ENCODE measurements at regions of chr2 and their contacts with region 1.

Region 1: DNA sequence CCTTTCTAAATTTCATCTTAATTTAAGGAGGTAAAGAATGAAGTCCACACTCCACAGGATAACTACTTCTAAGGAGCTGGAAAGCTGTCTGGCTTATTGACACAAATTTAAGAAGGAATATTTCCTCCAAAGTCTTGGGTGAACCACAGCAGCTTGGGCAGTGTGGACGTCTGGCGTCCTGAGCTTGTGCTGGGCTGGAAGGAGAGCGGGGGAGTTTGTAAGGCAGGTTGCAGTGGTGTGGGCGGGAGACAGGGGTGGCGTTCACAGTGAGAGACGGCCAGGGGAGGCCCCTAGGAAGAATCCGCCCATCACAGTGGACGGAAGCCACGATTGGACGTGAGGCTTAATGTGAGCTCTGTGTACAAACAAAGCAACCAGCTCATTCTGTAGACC is 25.7 kb downstream of the ADI1 start:
- DNase-seq: no peak
- H3K4me3 ChIP-seq: peak overlapping the region; percentile 21 to 55
- H3K27ac ChIP-seq: peak overlapping the region; percentile 90 to 93
- H3K4me1 ChIP-seq: peaks cover 6 to 16% of the 10 kb centered on the region in 2 donors
- H3K27me3 ChIP-seq: no peaks in the 10 kb centered on the region
- CTCF ChIP-seq: no peak

Region 2: GRCh38 chr2:3450375-3451010 is 43.1 kb before region 1 on chr2:
- intact Hi-C with region 1: no loop called
- DNase-seq: no peak
- H3K4me3 ChIP-seq: no peak overlapping the region
- H3K27ac ChIP-seq: no peak overlapping the region
- H3K4me1 ChIP-seq: no peaks in the 10 kb centered on the region
- H3K27me3 ChIP-seq: no peaks in the 10 kb centered on the region
- CTCF ChIP-seq: no peak

Region 3: DNA sequence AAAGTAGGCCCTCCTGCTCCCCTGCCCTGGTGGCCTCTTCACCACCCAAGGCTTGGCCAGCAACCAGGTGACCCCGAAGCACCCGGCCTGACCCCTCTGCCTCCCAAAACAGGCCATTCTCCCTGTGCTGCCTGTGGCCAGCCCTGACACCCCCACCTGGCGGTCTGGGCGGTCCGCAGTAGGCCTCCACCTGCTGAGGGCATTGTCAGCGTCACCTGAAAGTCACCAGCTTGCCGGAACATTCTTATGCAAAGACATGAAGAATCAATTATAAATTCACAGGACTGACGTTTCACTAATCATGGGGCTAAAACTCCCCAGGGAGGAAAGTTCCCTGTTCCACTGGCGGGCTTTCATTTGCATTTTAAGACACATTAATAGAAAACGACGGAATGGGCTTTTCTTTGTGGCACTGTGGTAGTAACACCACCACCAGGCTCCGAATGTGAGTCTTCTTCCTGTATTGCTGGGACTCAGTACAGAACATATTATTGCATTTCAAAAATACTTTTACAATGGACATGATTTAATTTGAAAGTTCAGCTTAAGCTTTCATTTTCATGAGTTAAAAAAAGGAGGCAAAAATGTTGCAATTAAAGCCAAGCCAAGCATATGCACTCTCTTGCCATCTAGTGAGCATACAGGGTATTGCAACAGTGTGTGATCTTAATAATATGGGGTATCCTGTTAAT is 31.7 kb before region 1 on chr2:
- intact Hi-C with region 1: loop called (anchors 2 kb)
- DNase-seq: peak in 1 of 2 donors; percentile 63
- H3K4me3 ChIP-seq: peak overlapping the region in 1 of 2 donors; percentile 32
- H3K27ac ChIP-seq: peak overlapping the region; percentile 78 to 90
- H3K4me1 ChIP-seq: peaks cover 6 to 7% of the 10 kb centered on the region in 2 donors
- H3K27me3 ChIP-seq: no peaks in the 10 kb centered on the region
- CTCF ChIP-seq: peak; percentile 54 to 97 (median 81)

Region 4: GRCh38 chr2:3470166-3470651 is 23.4 kb before region 1 on chr2:
- intact Hi-C with region 1: loop called (anchors 1 kb)
- DNase-seq: peak; percentile 60 to 93
- H3K4me3 ChIP-seq: peak overlapping the region in 1 of 2 donors; percentile 25
- H3K27ac ChIP-seq: peak overlapping the region; percentile 90 to 91
- H3K4me1 ChIP-seq: peaks cover 2 to 28% of the 10 kb centered on the region in 2 donors
- H3K27me3 ChIP-seq: no peaks in the 10 kb centered on the region
- CTCF ChIP-seq: no peak

Region 5: GRCh38 chr2:3518496-3519254 is 25.1 kb after region 1 on chr2:
- intact Hi-C with region 1: loop called (anchors 1 kb)
- DNase-seq: peak; percentile 91 to 98
- H3K4me3 ChIP-seq: peak overlapping the region; percentile 84 to 93
- H3K27ac ChIP-seq: peak overlapping the region; percentile 97 to 100
- H3K4me1 ChIP-seq: peaks cover 4 to 18% of the 10 kb centered on the region in 2 donors
- H3K27me3 ChIP-seq: no peaks in the 10 kb centered on the region
- CTCF ChIP-seq: no peak

Region 6: GRCh38 chr2:3575534-3576262 is 82.1 kb after region 1 on chr2:
- intact Hi-C with region 1: loop called (anchors 1 kb)
- DNase-seq: no peak
- H3K4me3 ChIP-seq: peak overlapping the region; percentile 73 to 89
- H3K27ac ChIP-seq: peak overlapping the region; percentile 88 to 94
- H3K4me1 ChIP-seq: peaks cover 9 to 11% of the 10 kb centered on the region in 2 donors
- H3K27me3 ChIP-seq: no peaks in the 10 kb centered on the region
- CTCF ChIP-seq: no peak

Measured in ascending aorta (tissue), 2 donors.